ENCODE measurements at regions of chr17 and their contacts with region 1.

Region 1: GRCh38 chr17:32783602-32784001 is 93.3 kb downstream of the MYO1D start:
- DNase-seq: peak; percentile 66
- ATAC-seq: peak; percentile 88
- H3K4me3 ChIP-seq: no peak overlapping the region
- H3K27ac ChIP-seq: no peak overlapping the region
- H3K4me1 ChIP-seq: no peaks in the 10 kb centered on the region
- H3K27me3 ChIP-seq: no peaks in the 10 kb centered on the region
- CTCF ChIP-seq: peak; percentile 87
- POLR2A ChIP-seq: 0 out of 2 replicates have a peak, but pooled peaks have one; percentile 35
- RAD21 ChIP-seq: peak; percentile 83

Region 2: DNA sequence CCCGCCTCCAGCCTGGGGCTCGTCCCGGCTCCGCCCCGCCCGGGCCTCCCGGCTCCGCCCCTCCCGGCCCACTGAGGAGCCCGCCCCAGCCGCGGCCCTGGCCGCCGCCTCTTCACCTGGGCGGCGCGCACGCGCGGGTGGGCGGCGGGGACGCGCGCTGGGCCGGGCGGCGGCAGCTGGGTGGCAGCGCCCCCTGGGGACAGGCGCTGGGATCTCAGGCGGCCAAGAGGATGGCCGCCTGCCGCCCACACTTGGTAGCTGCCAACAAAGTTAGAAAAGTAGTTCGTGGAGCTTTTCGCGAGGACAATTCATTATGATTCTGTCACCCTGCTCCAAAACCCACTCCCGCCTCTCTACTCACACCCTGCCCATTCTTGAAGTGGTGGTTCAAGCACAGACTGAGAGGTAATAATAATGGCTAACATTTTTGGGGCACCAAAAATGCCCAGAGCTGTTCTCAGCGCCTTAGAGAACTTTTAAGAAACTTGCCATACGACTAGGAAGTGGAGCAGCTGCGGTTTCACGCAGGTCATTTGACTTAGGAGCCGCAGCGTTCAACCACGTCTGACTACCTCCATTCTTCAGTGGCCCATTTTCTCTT is 93.7 kb after region 1 on chr17:
- CTCF ChIA-PET with region 1: interaction called, 11 read pairs
- POLR2A ChIA-PET with region 1: no interaction called
- dilution Hi-C with region 1: no loop called
- in situ Hi-C with region 1: no loop called
- intact Hi-C with region 1: loop called (anchors 1 kb)
- DNase-seq: peak; percentile 73
- ATAC-seq: peak; percentile 100
- H3K4me3 ChIP-seq: peak overlapping the region; percentile 60
- H3K27ac ChIP-seq: no peak overlapping the region
- H3K4me1 ChIP-seq: peaks cover 2% of the 10 kb centered on the region
- H3K27me3 ChIP-seq: peaks cover 7% of the 10 kb centered on the region
- CTCF ChIP-seq: peak; percentile 95
- POLR2A ChIP-seq: no peak
- RAD21 ChIP-seq: peak; percentile 52

Region 3: DNA sequence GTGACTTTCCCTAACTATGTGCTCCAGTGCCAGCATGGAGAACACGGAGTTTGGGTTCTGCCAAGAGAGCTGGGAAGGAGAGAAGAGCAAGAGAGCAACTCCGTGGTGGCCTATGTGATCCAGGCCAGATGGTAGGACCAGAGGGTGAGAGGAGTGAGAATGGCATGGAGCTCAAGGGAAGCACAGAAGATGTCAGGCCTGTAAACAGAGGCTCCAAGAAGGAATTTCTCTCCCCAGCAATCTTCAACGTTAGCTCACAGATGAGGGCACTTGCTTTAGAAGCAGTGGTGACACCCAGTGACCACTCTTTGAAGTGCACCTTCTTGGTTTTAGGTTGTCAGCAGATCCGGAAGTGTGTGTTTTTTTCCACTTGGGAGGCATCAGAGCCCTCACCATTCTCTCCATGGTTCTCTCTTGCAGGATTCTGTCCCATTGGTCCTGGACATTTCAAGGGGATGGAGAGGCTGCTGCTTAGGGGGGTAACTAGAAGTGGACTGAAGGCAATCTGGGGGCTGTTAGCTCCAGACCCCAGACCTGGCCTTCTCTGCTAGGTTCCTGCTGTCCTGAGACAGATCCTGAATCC is 126.3 kb after region 1 on chr17:
- CTCF ChIA-PET with region 1: interaction called, 9 read pairs
- POLR2A ChIA-PET with region 1: no interaction called
- dilution Hi-C with region 1: no loop called
- in situ Hi-C with region 1: loop called (anchors 25 kb)
- intact Hi-C with region 1: loop called (anchors 1 kb)
- DNase-seq: peak; percentile 84
- ATAC-seq: peak; percentile 84
- H3K4me3 ChIP-seq: no peak overlapping the region
- H3K27ac ChIP-seq: no peak overlapping the region
- H3K4me1 ChIP-seq: peaks cover 2% of the 10 kb centered on the region; the same call in 1 of the 2 replicates
- H3K27me3 ChIP-seq: peaks cover 3% of the 10 kb centered on the region; the same call in 1 of the 2 replicates
- CTCF ChIP-seq: peak; percentile 74
- POLR2A ChIP-seq: no peak
- RAD21 ChIP-seq: peak; percentile 69

Region 4: DNA sequence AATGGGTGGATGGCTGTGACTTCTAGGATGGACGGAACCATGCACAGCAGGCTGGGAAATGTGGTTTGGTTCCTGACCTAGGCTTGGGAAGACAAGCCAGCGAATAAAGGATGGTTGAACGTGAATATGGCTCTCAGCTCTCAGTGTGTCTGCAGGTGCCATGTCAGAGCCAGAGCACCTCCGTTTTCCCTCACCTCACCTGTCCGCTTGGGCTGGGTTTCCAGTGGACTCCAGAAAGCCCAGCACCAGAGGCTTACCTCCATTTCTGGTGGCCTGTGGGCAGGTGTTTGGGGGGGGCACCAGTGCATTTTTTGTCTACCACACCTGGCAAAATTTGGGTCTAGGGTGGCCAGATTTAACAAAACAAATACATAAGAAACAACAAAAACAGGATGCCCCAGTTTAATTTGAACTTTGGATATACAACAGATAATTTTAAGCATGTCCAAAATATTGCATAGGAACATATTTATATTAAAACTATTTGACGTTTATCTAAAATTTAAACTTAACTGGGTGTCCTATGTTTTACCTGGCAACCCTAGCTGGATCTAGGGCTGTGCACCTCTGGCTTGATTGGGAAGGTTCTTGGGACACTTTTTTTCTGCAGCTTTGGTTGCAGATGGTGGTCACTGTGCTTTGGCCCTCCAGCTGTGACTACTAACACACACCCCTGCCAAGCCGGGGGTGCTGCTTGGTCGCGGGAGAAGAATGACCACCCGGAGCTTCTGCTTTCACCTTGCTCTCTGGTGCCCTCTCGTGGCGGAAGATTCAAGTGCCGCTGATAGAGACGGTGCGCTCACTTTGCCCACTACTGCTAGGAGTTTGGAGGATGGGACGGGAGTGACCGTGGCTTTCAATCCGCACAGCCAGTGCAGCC is 214.4 kb after region 1 on chr17:
- CTCF ChIA-PET with region 1: interaction called, 9 read pairs
- POLR2A ChIA-PET with region 1: no interaction called
- dilution Hi-C with region 1: no loop called
- in situ Hi-C with region 1: loop called (anchors 10 kb)
- intact Hi-C with region 1: loop called (anchors 1 kb)
- DNase-seq: peak; percentile 68
- ATAC-seq: peak; percentile 96
- H3K4me3 ChIP-seq: no peak overlapping the region
- H3K27ac ChIP-seq: no peak overlapping the region
- H3K4me1 ChIP-seq: peaks cover 5% of the 10 kb centered on the region; the same call in 1 of the 2 replicates
- H3K27me3 ChIP-seq: peaks cover 17% of the 10 kb centered on the region; the same call in 1 of the 2 replicates
- CTCF ChIP-seq: peak; percentile 85
- POLR2A ChIP-seq: no peak
- RAD21 ChIP-seq: peak; percentile 62

Region 5: GRCh38 chr17:33049781-33050414 is 266.3 kb after region 1 on chr17:
- CTCF ChIA-PET with region 1: no interaction called
- POLR2A ChIA-PET with region 1: no interaction called
- dilution Hi-C with region 1: no loop called
- in situ Hi-C with region 1: no loop called
- intact Hi-C with region 1: loop called (anchors 2 kb)
- DNase-seq: peak; percentile 48
- ATAC-seq: peak; percentile 96
- H3K4me3 ChIP-seq: no peak overlapping the region
- H3K27ac ChIP-seq: no peak overlapping the region
- H3K4me1 ChIP-seq: no peaks in the 10 kb centered on the region
- H3K27me3 ChIP-seq: peaks cover 4% of the 10 kb centered on the region
- CTCF ChIP-seq: peak; percentile 81
- POLR2A ChIP-seq: no peak
- RAD21 ChIP-seq: peak; percentile 58

Region 6: DNA sequence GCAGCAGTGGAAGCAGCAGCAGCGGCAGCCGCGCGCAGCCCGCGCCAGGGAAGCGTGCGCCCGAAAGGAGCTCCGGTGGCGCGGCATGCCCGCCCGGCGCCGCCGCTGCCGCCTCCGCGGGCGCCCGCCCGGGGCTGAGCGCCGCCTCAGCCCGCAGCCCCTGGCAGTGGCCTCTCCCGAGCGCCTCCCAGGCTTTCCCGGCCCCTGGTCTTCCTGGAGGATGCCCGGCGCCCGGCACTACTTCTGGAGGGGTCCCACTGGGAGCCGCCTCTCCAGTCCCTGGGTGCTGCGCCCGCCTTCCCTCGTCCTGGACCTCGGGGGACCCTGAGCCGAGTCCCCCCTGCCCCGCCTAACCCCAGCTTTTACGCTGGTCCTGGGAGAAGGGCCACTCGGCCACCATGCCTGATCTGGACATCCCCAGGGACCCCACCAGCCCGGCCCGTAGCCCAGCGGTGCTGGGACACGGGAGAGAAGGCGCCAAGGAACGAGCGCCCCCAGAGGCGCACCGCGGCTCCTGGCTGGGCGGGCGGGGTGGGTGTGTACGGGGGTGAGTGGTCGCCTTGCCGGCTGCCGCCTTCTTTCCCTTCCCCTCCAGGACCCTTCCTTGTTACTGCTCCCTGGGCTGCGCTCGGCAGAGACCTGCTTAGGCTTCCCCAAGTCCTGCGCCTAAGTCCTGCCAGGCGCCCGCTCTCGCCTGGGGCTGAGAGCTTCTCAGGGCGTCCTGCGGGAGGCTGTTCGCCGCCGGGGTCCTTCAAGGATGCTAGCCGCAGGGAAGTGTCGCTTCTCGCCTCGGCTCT is 508.8 kb after region 1 on chr17:
- CTCF ChIA-PET with region 1: no interaction called
- POLR2A ChIA-PET with region 1: no interaction called
- dilution Hi-C with region 1: no loop called
- in situ Hi-C with region 1: no loop called
- intact Hi-C with region 1: loop called (anchors 1 kb)
- DNase-seq: peak; percentile 20
- ATAC-seq: peak; percentile 65
- H3K4me3 ChIP-seq: peak overlapping the region; percentile 52
- H3K27ac ChIP-seq: no peak overlapping the region; the same call in 1 of the 2 replicates
- H3K4me1 ChIP-seq: no peaks in the 10 kb centered on the region; the same call in 1 of the 2 replicates
- H3K27me3 ChIP-seq: peaks cover 23% of the 10 kb centered on the region
- CTCF ChIP-seq: peak; percentile 30
- POLR2A ChIP-seq: no peak
- RAD21 ChIP-seq: peak; percentile 33

Region 7: GRCh38 chr17:33674685-33675084 is 891.1 kb after region 1 on chr17:
- CTCF ChIA-PET with region 1: no interaction called
- POLR2A ChIA-PET with region 1: no interaction called
- dilution Hi-C with region 1: no loop called
- in situ Hi-C with region 1: no loop called
- intact Hi-C with region 1: loop called (anchors 2 kb)
- DNase-seq: peak; percentile 55
- ATAC-seq: peak; percentile 99
- H3K4me3 ChIP-seq: no peak overlapping the region
- H3K27ac ChIP-seq: no peak overlapping the region
- H3K4me1 ChIP-seq: no peaks in the 10 kb centered on the region
- H3K27me3 ChIP-seq: no peaks in the 10 kb centered on the region
- CTCF ChIP-seq: peak; percentile 67
- POLR2A ChIP-seq: no peak
- RAD21 ChIP-seq: peak; percentile 49

Measured in IMR-90 (cell line).